MCF 10A (cell line): ENCODE measurements at regions of chr1 and their contacts with region 1.

Region 1: GRCh38 chr1:214439352-214440119 is 111.9 kb downstream of the PTPN14 start:
- DNase-seq: peak; percentile 100
- H3K4me3 Mint-ChIP-seq: peak overlapping the region; percentile 65
- H3K27ac Mint-ChIP-seq: peak overlapping the region; percentile 99
- H3K4me1 Mint-ChIP-seq: peaks cover 61% of the 10 kb centered on the region
- H3K27me3 Mint-ChIP-seq: no peaks in the 10 kb centered on the region
- CTCF ChIP-seq: no peak

Region 2: DNA sequence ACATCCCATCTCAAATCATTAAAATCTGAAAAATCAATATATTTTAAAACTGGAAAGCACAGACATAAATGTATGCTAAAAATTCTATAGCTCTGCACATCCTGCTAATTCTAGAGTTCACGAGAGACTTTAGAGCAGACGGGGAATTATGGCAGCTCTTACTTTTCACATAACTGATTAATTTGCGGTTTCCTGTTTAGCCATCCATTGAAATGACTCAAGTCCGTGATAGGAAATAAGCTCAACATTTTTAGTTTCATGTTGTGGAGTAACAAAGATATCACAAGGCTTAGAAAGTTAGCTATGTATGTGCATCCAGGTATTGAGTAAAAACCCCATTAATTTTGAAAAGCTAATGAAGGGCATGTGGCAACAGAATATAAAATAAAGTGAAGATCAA is 35.4 kb before region 1 on chr1:
- CTCF ChIA-PET with region 1: interaction called, 4 read pairs
- POLR2A ChIA-PET with region 1: interaction called, 16 read pairs
- intact Hi-C with region 1: no loop called
- DNase-seq: peak; percentile 40
- H3K4me3 Mint-ChIP-seq: no peak overlapping the region
- H3K27ac Mint-ChIP-seq: peak overlapping the region; percentile 20
- H3K4me1 Mint-ChIP-seq: peaks cover 24% of the 10 kb centered on the region
- H3K27me3 Mint-ChIP-seq: no peaks in the 10 kb centered on the region
- CTCF ChIP-seq: no peak

Region 3: DNA sequence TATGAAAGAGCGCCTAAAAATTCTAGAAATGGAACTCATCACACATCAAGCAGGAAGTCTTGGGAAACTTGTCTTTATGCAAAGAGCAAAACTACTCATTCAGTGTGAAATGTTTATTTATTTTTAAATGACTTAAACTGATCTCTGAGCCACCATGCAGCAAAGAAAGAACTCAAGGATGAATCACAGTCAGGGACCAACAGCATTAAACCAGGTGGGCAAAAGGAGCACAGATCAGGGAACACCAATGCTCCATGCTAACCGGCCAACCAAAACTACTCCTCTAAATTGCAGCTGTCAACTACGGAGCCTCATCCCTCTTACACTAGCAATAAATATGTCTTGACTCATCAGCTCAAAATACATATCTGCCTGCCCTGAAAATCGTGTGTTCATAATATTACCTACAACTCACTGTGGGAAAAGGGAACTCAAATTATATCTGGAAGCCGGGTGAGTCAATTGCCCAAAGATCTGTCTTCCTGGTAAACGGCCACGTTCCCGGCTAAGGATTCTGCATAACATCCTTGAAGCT is 17.3 kb before region 1 on chr1:
- CTCF ChIA-PET with region 1: interaction called, 10 read pairs
- POLR2A ChIA-PET with region 1: interaction called, 143 read pairs
- intact Hi-C with region 1: loop called (anchors 2 kb)
- DNase-seq: peak; percentile 84
- H3K4me3 Mint-ChIP-seq: peak overlapping the region; percentile 6
- H3K27ac Mint-ChIP-seq: peak overlapping the region; percentile 80
- H3K4me1 Mint-ChIP-seq: peaks cover 77% of the 10 kb centered on the region
- H3K27me3 Mint-ChIP-seq: no peaks in the 10 kb centered on the region
- CTCF ChIP-seq: no peak

Region 4: DNA sequence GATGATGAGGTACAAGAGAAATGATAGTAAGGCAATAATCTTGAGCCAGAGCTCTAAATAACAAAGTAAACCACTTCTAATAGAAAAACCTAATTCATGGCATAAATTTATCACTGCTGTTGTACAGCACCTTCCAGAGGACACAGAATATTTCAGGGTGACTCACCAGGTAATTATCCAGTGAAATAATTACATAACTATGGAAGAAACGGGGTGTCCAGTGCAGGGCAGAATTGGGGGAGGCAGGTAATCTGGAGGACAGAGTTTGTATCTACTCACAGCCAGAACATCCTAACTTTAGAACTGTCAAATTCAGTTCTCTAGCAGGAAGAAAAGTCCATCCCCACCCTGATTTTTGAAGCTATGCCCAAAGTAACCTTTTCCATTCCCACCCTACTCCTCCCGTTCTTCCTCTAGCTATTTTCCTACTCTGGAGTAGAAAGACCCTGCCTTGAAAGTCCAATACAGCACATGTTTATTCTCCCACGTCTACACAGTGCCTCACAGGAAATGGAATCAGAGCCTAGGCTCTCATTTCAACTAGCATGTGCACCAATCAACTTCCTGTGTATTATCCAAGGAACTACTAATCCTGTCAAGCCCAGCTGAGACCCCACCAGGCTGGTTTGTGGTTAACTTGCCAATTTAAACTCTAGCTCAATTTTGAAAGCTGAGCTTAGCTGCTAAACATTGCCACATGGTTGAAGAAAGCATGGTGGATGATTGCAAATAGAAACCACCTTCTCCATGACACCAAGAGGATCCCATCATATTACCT is 15.3 kb after region 1 on chr1:
- CTCF ChIA-PET with region 1: interaction called, 67 read pairs
- POLR2A ChIA-PET with region 1: interaction called, 843 read pairs
- intact Hi-C with region 1: no loop called
- DNase-seq: peak; percentile 60
- H3K4me3 Mint-ChIP-seq: no peak overlapping the region
- H3K27ac Mint-ChIP-seq: peak overlapping the region; percentile 42
- H3K4me1 Mint-ChIP-seq: peaks cover 66% of the 10 kb centered on the region
- H3K27me3 Mint-ChIP-seq: no peaks in the 10 kb centered on the region
- CTCF ChIP-seq: no peak